Right cardiac atrium (tissue), 5 donors: ENCODE measurements at regions of chr17 and their contacts with region 1.

Region 1: GRCh38 chr17:6603744-6604325 is 36.7 kb downstream of the KIAA0753 start:
- DNase-seq: peak in 2 of 3 donors; percentile 20 to 66
- ATAC-seq: no peak
- H3K4me3 ChIP-seq: no peak overlapping the region
- H3K27ac ChIP-seq: no peak overlapping the region
- H3K4me1 ChIP-seq: no peaks in the 10 kb centered on the region
- H3K27me3 ChIP-seq: no peaks in the 10 kb centered on the region

Region 2: GRCh38 chr17:6145946-6146345 is 457.9 kb before region 1 on chr17:
- intact Hi-C with region 1: no loop called
- DNase-seq: no peak
- ATAC-seq: no peak
- H3K4me3 ChIP-seq: no peak overlapping the region
- H3K27ac ChIP-seq: no peak overlapping the region
- H3K4me1 ChIP-seq: no peaks in the 10 kb centered on the region
- H3K27me3 ChIP-seq: no peaks in the 10 kb centered on the region

Region 3: GRCh38 chr17:6534846-6535514 is 68.9 kb before region 1 on chr17:
- intact Hi-C with region 1: loop called in 1 of 4 experiments (anchors 2 kb)
- DNase-seq: no peak
- ATAC-seq: peak; percentile 47 to 48
- H3K4me3 ChIP-seq: no peak overlapping the region
- H3K27ac ChIP-seq: no peak overlapping the region
- H3K4me1 ChIP-seq: no peaks in the 10 kb centered on the region
- H3K27me3 ChIP-seq: no peaks in the 10 kb centered on the region